Activated CD4-positive, alpha-beta T cell treated with anti-CD3 and anti-CD28 coated beads for 36 hours (primary cell): ENCODE measurements at regions of chr3 and their contacts with region 1.

Region 1: DNA sequence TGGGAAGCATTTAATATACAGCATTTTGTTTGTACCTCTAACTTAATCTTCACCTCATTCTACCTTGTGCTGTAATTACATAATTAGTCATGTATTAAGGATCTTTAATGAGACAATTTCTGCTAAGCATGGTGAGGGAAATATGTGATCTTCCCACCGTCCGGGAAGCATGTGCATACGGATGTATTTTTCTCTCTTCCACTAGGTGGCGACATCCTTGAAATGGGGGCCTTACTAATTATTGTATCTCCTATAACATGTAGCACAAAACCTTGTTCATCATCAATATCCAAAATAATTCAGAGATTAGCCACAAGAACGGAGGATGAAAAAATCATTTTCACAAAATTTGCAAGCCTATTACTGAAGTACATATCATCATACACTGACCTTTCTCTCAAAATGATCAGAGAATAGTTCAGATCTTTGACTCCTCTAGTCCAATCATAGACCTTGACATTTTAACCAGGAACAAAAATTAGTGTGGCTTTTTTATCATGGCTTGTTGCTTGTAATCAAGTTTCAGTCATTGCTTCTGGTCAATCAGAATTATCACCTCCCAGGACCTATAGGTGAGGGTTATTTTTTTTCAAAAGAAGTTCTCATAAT is 148.9 kb upstream of the GBE1 start:
- DNase-seq: peak; percentile 17
- ATAC-seq: peak; percentile 49
- H3K4me3 Mint-ChIP-seq: no peak overlapping the region
- H3K27ac Mint-ChIP-seq: no peak overlapping the region
- H3K4me1 Mint-ChIP-seq: no peaks in the 10 kb centered on the region
- H3K27me3 Mint-ChIP-seq: peaks cover 5% of the 10 kb centered on the region

Region 2: GRCh38 chr3:81490541-81491288 is 419.6 kb before region 1 on chr3:
- CTCF ChIA-PET with region 1: no interaction called
- POLR2A ChIA-PET with region 1: no interaction called
- intact Hi-C with region 1: loop called in 1 of 2 experiments (anchors 1 kb)
- DNase-seq: peak; percentile 88
- ATAC-seq: peak; percentile 84
- H3K4me3 Mint-ChIP-seq: no peak overlapping the region
- H3K27ac Mint-ChIP-seq: no peak overlapping the region
- H3K4me1 Mint-ChIP-seq: no peaks in the 10 kb centered on the region
- H3K27me3 Mint-ChIP-seq: no peaks in the 10 kb centered on the region

Region 3: GRCh38 chr3:81622395-81622794 is 288.0 kb before region 1 on chr3:
- CTCF ChIA-PET with region 1: no interaction called
- POLR2A ChIA-PET with region 1: no interaction called
- intact Hi-C with region 1: no loop called
- DNase-seq: no peak
- ATAC-seq: no peak
- H3K4me3 Mint-ChIP-seq: no peak overlapping the region
- H3K27ac Mint-ChIP-seq: no peak overlapping the region
- H3K4me1 Mint-ChIP-seq: no peaks in the 10 kb centered on the region
- H3K27me3 Mint-ChIP-seq: no peaks in the 10 kb centered on the region

Region 4: DNA sequence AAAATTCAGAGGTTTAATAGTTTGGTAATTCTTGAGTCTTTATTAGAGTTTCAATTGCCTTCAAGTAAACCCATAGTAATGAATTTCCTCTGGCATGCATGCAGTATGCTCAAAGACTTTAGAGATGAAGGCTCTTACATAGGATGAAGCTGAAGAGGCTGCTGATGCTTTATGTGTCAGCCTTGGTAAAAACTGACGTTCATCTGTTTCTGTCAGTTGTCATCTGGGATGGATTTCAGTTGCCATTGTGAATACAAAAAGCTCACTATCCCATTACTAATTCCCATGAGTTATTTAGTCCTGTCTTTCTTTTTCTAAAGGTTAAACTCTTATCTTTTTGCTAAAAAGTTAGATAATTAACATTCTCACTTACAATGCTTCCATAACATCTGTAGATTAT is 12.0 kb before region 1 on chr3:
- CTCF ChIA-PET with region 1: interaction called, 16 read pairs
- POLR2A ChIA-PET with region 1: no interaction called
- intact Hi-C with region 1: no loop called
- DNase-seq: no peak
- ATAC-seq: no peak
- H3K4me3 Mint-ChIP-seq: no peak overlapping the region
- H3K27ac Mint-ChIP-seq: no peak overlapping the region
- H3K4me1 Mint-ChIP-seq: no peaks in the 10 kb centered on the region
- H3K27me3 Mint-ChIP-seq: no peaks in the 10 kb centered on the region

Region 5: DNA sequence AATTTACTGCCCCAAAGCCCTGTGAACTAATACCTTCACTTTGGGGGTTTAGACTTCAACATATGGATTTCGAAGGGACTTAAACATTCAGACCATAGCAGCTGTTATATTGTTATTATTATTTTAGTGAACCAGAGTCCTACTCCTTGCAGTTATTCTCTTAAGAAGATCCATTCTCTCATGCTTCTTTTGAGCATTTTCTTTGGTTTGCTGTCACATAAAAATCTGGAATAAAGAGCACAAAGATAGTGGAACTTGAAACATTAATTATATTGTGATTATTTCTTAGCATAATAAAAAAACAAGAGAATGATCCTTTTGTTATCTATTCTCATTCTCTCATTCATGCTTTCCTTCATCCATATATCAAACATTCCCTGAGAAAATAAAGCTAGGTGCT is 17.5 kb after region 1 on chr3:
- CTCF ChIA-PET with region 1: interaction called, 10 read pairs
- POLR2A ChIA-PET with region 1: no interaction called
- intact Hi-C with region 1: no loop called
- DNase-seq: no peak
- ATAC-seq: no peak
- H3K4me3 Mint-ChIP-seq: no peak overlapping the region
- H3K27ac Mint-ChIP-seq: no peak overlapping the region
- H3K4me1 Mint-ChIP-seq: no peaks in the 10 kb centered on the region
- H3K27me3 Mint-ChIP-seq: peaks cover 3% of the 10 kb centered on the region

Region 6: GRCh38 chr3:81952141-81952540 is 41.8 kb after region 1 on chr3:
- CTCF ChIA-PET with region 1: no interaction called
- POLR2A ChIA-PET with region 1: no interaction called
- intact Hi-C with region 1: no loop called
- DNase-seq: no peak
- ATAC-seq: no peak
- H3K4me3 Mint-ChIP-seq: no peak overlapping the region
- H3K27ac Mint-ChIP-seq: no peak overlapping the region
- H3K4me1 Mint-ChIP-seq: no peaks in the 10 kb centered on the region
- H3K27me3 Mint-ChIP-seq: no peaks in the 10 kb centered on the region

Region 7: DNA sequence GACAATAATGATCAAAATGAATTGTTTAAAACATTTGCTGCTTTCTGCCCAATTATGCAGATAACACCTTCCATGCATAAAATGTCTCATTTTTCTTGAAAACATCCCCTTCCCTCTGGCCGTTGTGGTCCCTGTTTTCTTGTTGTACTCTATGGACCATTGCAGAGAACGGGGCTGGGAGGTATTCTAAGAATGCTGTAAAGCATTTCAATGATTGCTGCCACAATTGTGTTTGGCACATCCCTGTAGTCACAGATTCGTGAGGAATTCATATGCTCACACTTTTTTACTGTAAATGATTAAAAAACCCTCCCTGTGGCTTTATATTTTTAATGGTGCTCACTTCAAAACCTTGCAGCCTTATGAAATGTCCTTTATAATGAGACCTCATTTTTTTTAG is 58.3 kb after region 1 on chr3:
- CTCF ChIA-PET with region 1: no interaction called
- POLR2A ChIA-PET with region 1: no interaction called
- intact Hi-C with region 1: no loop called
- DNase-seq: no peak
- ATAC-seq: no peak
- H3K4me3 Mint-ChIP-seq: no peak overlapping the region
- H3K27ac Mint-ChIP-seq: no peak overlapping the region
- H3K4me1 Mint-ChIP-seq: no peaks in the 10 kb centered on the region
- H3K27me3 Mint-ChIP-seq: no peaks in the 10 kb centered on the region

Region 8: DNA sequence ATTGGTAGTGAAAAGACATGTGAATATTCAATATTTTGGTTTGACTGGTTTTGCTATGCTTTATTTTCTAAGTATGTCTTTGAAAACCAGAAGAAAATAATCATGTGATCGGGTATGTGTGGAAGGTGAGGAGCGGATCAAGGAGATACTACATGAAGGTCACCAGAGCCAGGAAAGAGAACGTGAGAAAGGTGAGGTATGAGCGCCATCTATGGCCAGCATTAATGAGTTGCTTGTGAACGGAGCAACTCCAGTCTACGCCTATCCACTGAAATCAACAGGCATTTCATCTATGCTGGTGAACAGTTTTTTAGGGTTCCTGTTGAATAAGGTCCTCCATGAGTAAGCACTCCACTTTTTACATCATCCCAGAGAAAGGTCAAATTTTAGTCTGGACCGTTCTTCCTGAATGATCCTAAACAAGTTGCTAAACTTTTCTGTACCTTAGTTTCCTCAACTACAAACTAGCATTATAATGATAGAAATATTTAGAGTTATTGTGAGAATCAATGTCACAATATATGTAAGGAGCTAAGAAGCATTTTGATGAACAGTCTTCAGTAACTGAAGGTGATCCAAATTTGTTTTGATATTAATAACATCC is 1613.2 kb after region 1 on chr3:
- CTCF ChIA-PET with region 1: no interaction called
- POLR2A ChIA-PET with region 1: no interaction called
- intact Hi-C with region 1: loop called in 1 of 2 experiments (anchors 2 kb)
- DNase-seq: peak; percentile 38
- ATAC-seq: no peak
- H3K4me3 Mint-ChIP-seq: no peak overlapping the region
- H3K27ac Mint-ChIP-seq: no peak overlapping the region
- H3K4me1 Mint-ChIP-seq: no peaks in the 10 kb centered on the region
- H3K27me3 Mint-ChIP-seq: no peaks in the 10 kb centered on the region